ENCODE measurements at regions of chr4 and their contacts with region 1.

Region 1: DNA sequence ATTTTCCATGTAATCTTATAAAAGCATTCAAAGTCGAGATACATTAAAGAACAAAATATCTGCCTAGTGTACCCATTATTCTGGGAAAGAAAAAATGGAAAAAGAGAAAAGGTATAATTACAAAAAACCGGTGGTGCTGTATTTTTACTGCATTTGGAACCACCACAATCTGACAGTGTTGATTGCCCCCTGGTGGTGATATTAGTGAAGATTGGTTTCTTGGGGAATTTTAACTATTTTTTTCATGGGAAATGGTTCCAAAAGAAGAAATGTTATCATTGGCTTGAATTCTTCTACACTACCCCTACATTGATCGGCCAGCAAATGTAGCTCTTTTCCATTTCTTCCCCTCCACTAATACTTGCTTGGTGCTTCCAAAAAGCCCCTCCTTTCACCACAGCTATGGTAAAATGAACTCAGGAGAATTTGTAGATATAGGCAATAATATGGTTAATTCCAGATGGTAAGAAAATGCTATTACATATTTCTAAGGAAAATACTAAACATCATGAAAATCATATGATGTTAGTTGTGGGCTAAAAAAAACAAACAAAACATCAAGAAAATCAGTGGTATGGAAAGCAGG is 50.0 kb downstream of the COX18 start:
- DNase-seq: peak in 1 of 2 donors; percentile 11
- ATAC-seq: no peak
- H3K4me3 ChIP-seq: no peak overlapping the region
- H3K27ac ChIP-seq: no peak overlapping the region
- H3K4me1 ChIP-seq: no peaks in the 10 kb centered on the region
- H3K27me3 ChIP-seq: no peaks in the 10 kb centered on the region
- CTCF ChIP-seq: peak; percentile 59 to 78 (median 71)

Region 2: DNA sequence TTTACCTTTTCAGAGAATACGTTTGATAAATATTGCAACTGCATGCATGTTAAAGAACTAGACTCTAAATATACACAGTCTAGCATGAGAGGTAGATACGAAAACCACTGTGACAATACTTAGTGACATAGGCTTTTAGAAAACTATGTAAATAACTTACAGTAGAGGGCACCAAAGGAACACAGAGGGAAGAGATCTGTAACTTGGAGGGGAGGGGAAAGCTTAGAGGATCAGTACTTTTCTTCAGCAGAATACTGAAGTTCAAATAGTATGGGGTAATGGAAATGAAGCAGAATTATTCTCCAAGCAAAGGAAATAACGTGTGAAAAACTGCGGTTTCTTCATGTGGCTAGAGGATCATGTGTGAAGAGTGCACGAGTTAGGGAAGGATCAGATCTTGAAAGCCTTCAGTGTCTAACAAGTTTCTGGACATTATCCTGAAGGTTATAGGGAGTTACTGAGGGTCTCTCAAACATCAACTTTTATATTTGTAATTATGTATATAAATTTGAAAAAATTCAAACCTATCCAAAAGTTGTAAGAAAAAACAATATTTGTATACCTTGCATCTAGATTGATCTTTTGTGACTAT is 723.5 kb before region 1 on chr4:
- intact Hi-C with region 1: loop called in 2 of 10 experiments (anchors 5 to 10 kb)
- DNase-seq: no peak
- ATAC-seq: peak in 7 of 8 donors; percentile 56 to 77 (median 70)
- H3K4me3 ChIP-seq: no peak overlapping the region
- H3K27ac ChIP-seq: no peak overlapping the region
- H3K4me1 ChIP-seq: no peaks in the 10 kb centered on the region
- H3K27me3 ChIP-seq: no peaks in the 10 kb centered on the region
- CTCF ChIP-seq: peak; percentile 30 to 82 (median 67)

Region 3: DNA sequence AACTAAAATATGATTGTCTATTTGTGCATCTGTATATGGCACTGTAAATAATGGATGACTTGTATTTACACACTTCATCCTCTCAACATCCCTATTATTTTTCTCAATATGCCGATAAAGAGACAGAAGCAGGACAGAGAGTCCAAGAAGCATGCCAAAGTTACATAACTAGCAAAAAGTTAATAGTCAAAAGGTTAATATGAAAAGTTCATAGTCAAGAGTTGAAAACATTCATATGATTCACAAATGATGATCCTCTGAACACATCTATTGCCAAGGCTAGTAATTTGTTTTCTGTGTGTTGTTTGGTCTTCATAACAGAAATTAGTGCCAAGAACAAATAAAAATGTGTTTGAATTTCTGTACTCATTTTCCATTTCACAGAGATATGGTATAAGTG is 681.5 kb before region 1 on chr4:
- intact Hi-C with region 1: loop called in 1 of 10 experiments (anchors 10 kb)
- DNase-seq: no peak
- ATAC-seq: peak in 1 of 8 donors; percentile 62
- H3K4me3 ChIP-seq: no peak overlapping the region
- H3K27ac ChIP-seq: no peak overlapping the region
- H3K4me1 ChIP-seq: peaks cover 0 to 6% (median 0%) of the 10 kb centered on the region in 9 donors
- H3K27me3 ChIP-seq: no peaks in the 10 kb centered on the region
- CTCF ChIP-seq: no peak

Region 4: GRCh38 chr4:72500214-72500613 is 519.3 kb before region 1 on chr4:
- intact Hi-C with region 1: loop called in 8 of 10 experiments (anchors 2 to 10 kb)
- DNase-seq: no peak
- ATAC-seq: no peak
- H3K4me3 ChIP-seq: no peak overlapping the region
- H3K27ac ChIP-seq: no peak overlapping the region
- H3K4me1 ChIP-seq: no peaks in the 10 kb centered on the region
- H3K27me3 ChIP-seq: no peaks in the 10 kb centered on the region
- CTCF ChIP-seq: no peak

Region 5: GRCh38 chr4:72505314-72505744 is 514.2 kb before region 1 on chr4:
- intact Hi-C with region 1: loop called in 9 of 10 experiments (anchors 2 to 10 kb)
- DNase-seq: peak in 1 of 2 donors; percentile 4
- ATAC-seq: peak; percentile 44 to 70 (median 56)
- H3K4me3 ChIP-seq: no peak overlapping the region
- H3K27ac ChIP-seq: no peak overlapping the region
- H3K4me1 ChIP-seq: no peaks in the 10 kb centered on the region
- H3K27me3 ChIP-seq: peaks cover 0 to 3% (median 0%) of the 10 kb centered on the region in 7 donors
- CTCF ChIP-seq: peak; percentile 37 to 76 (median 71)

Region 6: GRCh38 chr4:72701987-72702819 is 317.4 kb before region 1 on chr4:
- intact Hi-C with region 1: loop called in 9 of 10 experiments (anchors 2 to 10 kb)
- DNase-seq: peak in 1 of 2 donors; percentile 26
- ATAC-seq: peak in 1 of 8 donors; percentile 47
- H3K4me3 ChIP-seq: peak overlapping the region in 9 of 10 donors; percentile 2 to 49 (median 41)
- H3K27ac ChIP-seq: no peak overlapping the region
- H3K4me1 ChIP-seq: peaks cover 0 to 6% (median 0%) of the 10 kb centered on the region in 9 donors
- H3K27me3 ChIP-seq: no peaks in the 10 kb centered on the region
- CTCF ChIP-seq: peak in 7 of 9 donors; percentile 55 to 76 (median 70)